ENCODE measurements at regions of chr16 and their contacts with region 1.

Region 1: GRCh38 chr16:68704232-68704867 is 32.7 kb upstream of the CDH1 start:
- H3K4me3 Mint-ChIP-seq: no peak overlapping the region
- H3K27ac Mint-ChIP-seq: no peak overlapping the region
- H3K4me1 Mint-ChIP-seq: peaks cover 20% of the 10 kb centered on the region
- H3K27me3 Mint-ChIP-seq: peaks cover 20% of the 10 kb centered on the region

Region 2: GRCh38 chr16:68538880-68539701 is 165.3 kb before region 1 on chr16 and contains the start of gene ZFP90:
- intact Hi-C with region 1: loop called (anchors 10 kb)
- H3K4me3 Mint-ChIP-seq: peak within 1 kb of the TSS; percentile 93
- H3K27ac Mint-ChIP-seq: peak within 1 kb of the TSS; percentile 90
- H3K4me1 Mint-ChIP-seq: peaks cover 7% of the 10 kb centered on the region
- H3K27me3 Mint-ChIP-seq: no peaks in the 10 kb centered on the region

Region 3: GRCh38 chr16:68800257-68800875 is 96.0 kb after region 1 on chr16:
- intact Hi-C with region 1: loop called (anchors 1 kb)
- H3K4me3 Mint-ChIP-seq: no peak overlapping the region
- H3K27ac Mint-ChIP-seq: no peak overlapping the region
- H3K4me1 Mint-ChIP-seq: no peaks in the 10 kb centered on the region
- H3K27me3 Mint-ChIP-seq: peaks cover 15% of the 10 kb centered on the region

Region 4: GRCh38 chr16:69123910-69124309 is 419.6 kb after region 1 on chr16:
- intact Hi-C with region 1: loop called (anchors 10 kb)
- H3K4me3 Mint-ChIP-seq: no peak overlapping the region
- H3K27ac Mint-ChIP-seq: no peak overlapping the region
- H3K4me1 Mint-ChIP-seq: peaks cover 12% of the 10 kb centered on the region
- H3K27me3 Mint-ChIP-seq: no peaks in the 10 kb centered on the region

Measured in dendritic cell treated with granulocyte-macrophage colony-stimulating factor and Interleukin-4, amounts not matched to agents 40 ng/mL and 50 ng/mL, for 4 days (primary cell).